ENCODE measurements at regions of chr6 and their contacts with region 1.

Region 1: DNA sequence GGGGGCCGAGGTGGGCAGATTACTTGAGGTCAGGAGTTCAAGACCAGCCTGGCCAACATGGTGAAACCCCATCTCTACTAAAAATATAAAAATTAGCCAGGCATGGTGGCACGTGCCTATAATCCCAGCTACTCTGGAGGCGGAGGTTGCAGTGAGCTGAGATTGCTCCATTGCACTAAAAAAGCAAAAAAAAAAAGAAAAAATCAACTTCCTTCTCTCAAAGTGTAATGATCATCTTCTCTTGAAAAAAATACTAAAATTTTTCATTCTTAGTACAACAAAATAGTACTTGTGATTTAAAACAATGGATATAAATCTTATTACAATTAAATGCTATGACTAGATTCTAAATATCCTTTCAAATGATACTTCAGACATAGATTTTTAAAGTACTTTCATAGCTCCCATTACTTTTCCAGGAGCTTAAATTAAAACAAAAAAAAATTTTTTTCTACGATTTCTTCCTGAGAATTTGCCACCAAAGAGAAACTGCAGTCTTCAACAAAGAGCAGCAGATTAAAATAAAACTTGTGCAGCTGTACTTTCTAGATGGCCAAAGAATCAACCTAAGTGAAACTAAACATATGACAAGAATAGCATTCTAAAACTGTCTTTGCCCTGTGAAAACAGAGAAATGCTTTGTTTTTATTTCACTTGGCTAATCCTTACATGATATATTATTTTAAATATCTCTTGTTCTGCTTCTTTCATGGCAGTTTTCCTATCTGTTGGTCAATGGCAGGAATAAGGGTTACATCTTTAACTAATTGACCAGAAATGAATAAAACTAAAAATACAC is 75.2 kb downstream of the MAP3K5 start:
- DNase-seq: peak; percentile 47
- ATAC-seq: peak; percentile 48
- H3K4me3 ChIP-seq: peak overlapping the region; percentile 49
- H3K27ac ChIP-seq: peak overlapping the region; percentile 97
- H3K4me1 ChIP-seq: peaks cover 38% of the 10 kb centered on the region
- H3K27me3 ChIP-seq: no peaks in the 10 kb centered on the region
- CTCF ChIP-seq: no peak
- EP300 ChIP-seq: no peak
- POLR2A ChIP-seq: no peak
- RAD21 ChIP-seq: no peak

Region 2: GRCh38 chr6:136566007-136566496 is 151.1 kb before region 1 on chr6:
- CTCF ChIA-PET with region 1: no interaction called
- POLR2A ChIA-PET with region 1: no interaction called
- RAD21 ChIA-PET with region 1: no interaction called
- SMC1A ChIA-PET with region 1: no interaction called
- in situ Hi-C with region 1: no loop called
- intact Hi-C with region 1: no loop called
- DNase-seq: no peak
- ATAC-seq: no peak
- H3K4me3 ChIP-seq: no peak overlapping the region
- H3K27ac ChIP-seq: no peak overlapping the region
- H3K4me1 ChIP-seq: no peaks in the 10 kb centered on the region
- H3K27me3 ChIP-seq: no peaks in the 10 kb centered on the region
- CTCF ChIP-seq: no peak
- EP300 ChIP-seq: no peak
- POLR2A ChIP-seq: no peak
- RAD21 ChIP-seq: no peak

Region 3: DNA sequence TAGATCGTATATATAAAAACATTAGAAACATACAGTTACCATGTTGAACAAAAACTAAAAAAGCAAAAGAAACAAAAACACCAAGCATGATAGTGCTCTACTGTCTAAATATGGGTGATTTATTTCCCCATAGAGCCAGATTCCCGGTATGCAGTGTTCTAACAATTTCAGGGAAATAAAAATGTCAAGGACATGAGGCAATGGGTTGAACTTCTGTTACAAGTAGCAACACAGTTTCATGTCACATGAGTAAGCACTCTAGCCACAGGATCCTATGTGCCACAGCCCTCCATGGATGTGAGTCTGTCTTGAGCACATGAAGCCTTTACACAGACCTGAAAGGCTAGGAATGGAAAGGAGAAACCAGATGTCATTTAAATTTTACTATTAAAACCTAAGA is 20.9 kb before region 1 on chr6:
- CTCF ChIA-PET with region 1: no interaction called
- POLR2A ChIA-PET with region 1: interaction called, 3 read pairs
- RAD21 ChIA-PET with region 1: interaction called, 6 read pairs
- SMC1A ChIA-PET with region 1: interaction called, 27 read pairs
- in situ Hi-C with region 1: no loop called
- intact Hi-C with region 1: no loop called
- DNase-seq: no peak
- ATAC-seq: no peak
- H3K4me3 ChIP-seq: no peak overlapping the region
- H3K27ac ChIP-seq: no peak overlapping the region
- H3K4me1 ChIP-seq: no peaks in the 10 kb centered on the region
- H3K27me3 ChIP-seq: no peaks in the 10 kb centered on the region
- CTCF ChIP-seq: no peak
- EP300 ChIP-seq: no peak
- POLR2A ChIP-seq: no peak
- RAD21 ChIP-seq: no peak

Region 4: DNA sequence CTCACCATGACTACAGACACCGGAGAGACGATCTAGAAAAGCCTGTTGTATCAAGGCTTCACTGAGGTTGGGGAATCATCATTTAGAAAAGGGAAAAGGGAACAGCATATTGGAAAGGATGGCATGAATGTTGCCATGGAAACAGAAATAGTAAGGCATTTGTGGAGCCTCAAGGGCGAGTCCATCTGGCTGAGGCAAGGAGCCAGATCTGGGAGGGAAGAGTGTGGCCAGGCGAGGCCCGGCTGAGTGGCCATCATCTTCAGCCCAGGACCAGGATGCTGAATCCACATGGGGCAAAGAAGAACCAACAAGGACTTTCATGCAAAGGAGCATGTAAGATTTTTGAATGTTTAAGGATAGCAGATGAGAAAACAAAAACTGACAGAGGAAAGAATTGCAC is 10.7 kb before region 1 on chr6:
- CTCF ChIA-PET with region 1: interaction called, 3 read pairs
- POLR2A ChIA-PET with region 1: interaction called, 3 read pairs
- RAD21 ChIA-PET with region 1: interaction called, 5 read pairs
- SMC1A ChIA-PET with region 1: interaction called, 28 read pairs
- in situ Hi-C with region 1: no loop called
- intact Hi-C with region 1: no loop called
- DNase-seq: no peak
- ATAC-seq: no peak
- H3K4me3 ChIP-seq: no peak overlapping the region
- H3K27ac ChIP-seq: no peak overlapping the region
- H3K4me1 ChIP-seq: no peaks in the 10 kb centered on the region
- H3K27me3 ChIP-seq: no peaks in the 10 kb centered on the region
- CTCF ChIP-seq: no peak
- EP300 ChIP-seq: no peak
- POLR2A ChIP-seq: no peak
- RAD21 ChIP-seq: no peak

Region 5: GRCh38 chr6:136728976-136729515 is 11.9 kb after region 1 on chr6:
- CTCF ChIA-PET with region 1: interaction called, 10 read pairs
- POLR2A ChIA-PET with region 1: interaction called, 23 read pairs
- RAD21 ChIA-PET with region 1: interaction called, 33 read pairs
- SMC1A ChIA-PET with region 1: interaction called, 93 read pairs
- in situ Hi-C with region 1: no loop called
- intact Hi-C with region 1: no loop called
- DNase-seq: no peak
- ATAC-seq: no peak
- H3K4me3 ChIP-seq: no peak overlapping the region
- H3K27ac ChIP-seq: no peak overlapping the region
- H3K4me1 ChIP-seq: peaks cover 25% of the 10 kb centered on the region
- H3K27me3 ChIP-seq: no peaks in the 10 kb centered on the region
- CTCF ChIP-seq: no peak
- EP300 ChIP-seq: no peak
- POLR2A ChIP-seq: no peak
- RAD21 ChIP-seq: no peak

Region 6: GRCh38 chr6:136737871-136738691 is 21.0 kb after region 1 on chr6:
- CTCF ChIA-PET with region 1: interaction called, 24 read pairs
- POLR2A ChIA-PET with region 1: interaction called, 6 read pairs
- RAD21 ChIA-PET with region 1: interaction called, 31 read pairs
- SMC1A ChIA-PET with region 1: interaction called, 370 read pairs
- in situ Hi-C with region 1: no loop called
- intact Hi-C with region 1: no loop called
- DNase-seq: no peak
- ATAC-seq: no peak
- H3K4me3 ChIP-seq: no peak overlapping the region
- H3K27ac ChIP-seq: no peak overlapping the region
- H3K4me1 ChIP-seq: peaks cover 7% of the 10 kb centered on the region; the same call in 1 of the 2 replicates
- H3K27me3 ChIP-seq: no peaks in the 10 kb centered on the region
- CTCF ChIP-seq: no peak
- EP300 ChIP-seq: no peak
- POLR2A ChIP-seq: no peak
- RAD21 ChIP-seq: no peak

Region 7: DNA sequence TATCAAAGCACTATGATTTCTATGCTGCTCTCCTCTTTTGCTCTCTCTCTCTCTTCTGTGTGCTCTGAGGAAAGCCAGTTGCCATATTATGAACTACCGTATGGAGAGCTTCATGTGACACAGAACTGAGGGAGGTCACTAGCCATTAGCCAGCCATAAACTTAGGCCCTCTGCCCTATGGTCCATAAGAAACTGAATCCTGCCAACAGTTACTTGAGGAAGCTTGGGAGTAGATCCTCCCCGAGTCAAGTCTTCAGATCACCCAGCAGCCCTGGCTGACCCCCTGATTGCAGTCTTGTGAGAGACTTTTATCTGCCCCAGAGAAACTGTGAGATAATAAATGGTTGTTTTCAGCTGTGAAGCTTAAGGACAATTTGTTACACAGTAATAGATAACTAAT is 99.5 kb after region 1 on chr6:
- CTCF ChIA-PET with region 1: no interaction called
- POLR2A ChIA-PET with region 1: no interaction called
- RAD21 ChIA-PET with region 1: no interaction called
- SMC1A ChIA-PET with region 1: no interaction called
- in situ Hi-C with region 1: no loop called
- intact Hi-C with region 1: no loop called
- DNase-seq: no peak
- ATAC-seq: no peak
- H3K4me3 ChIP-seq: no peak overlapping the region
- H3K27ac ChIP-seq: no peak overlapping the region
- H3K4me1 ChIP-seq: no peaks in the 10 kb centered on the region
- H3K27me3 ChIP-seq: no peaks in the 10 kb centered on the region
- CTCF ChIP-seq: no peak
- EP300 ChIP-seq: no peak
- POLR2A ChIP-seq: no peak
- RAD21 ChIP-seq: no peak